ENCODE measurements at regions of chr3 and their contacts with region 1.

Region 1: DNA sequence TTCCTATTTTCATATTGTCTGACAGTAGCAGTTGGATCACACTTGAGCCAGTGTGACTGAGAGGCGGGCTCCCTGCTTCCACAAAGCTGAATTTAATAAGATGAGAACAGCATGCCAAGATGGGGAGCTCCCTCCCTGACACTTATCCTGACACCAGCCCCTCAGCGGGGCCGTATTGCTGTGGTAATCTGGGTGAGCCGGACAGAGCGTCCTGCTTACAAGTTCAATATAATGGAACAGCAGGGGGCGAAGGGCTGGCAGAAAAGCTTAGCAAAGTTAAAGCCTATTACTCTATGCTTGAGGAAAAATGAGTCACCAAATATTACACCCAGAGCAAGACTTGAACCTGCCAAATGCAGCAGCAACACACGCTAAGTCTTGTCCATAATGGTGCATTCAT is 163.8 kb upstream of the CMC1 start:
- DNase-seq: no peak
- ATAC-seq: no peak
- H3K4me3 ChIP-seq: no peak overlapping the region
- H3K27ac ChIP-seq: no peak overlapping the region
- H3K4me1 ChIP-seq: no peaks in the 10 kb centered on the region
- H3K27me3 ChIP-seq: no peaks in the 10 kb centered on the region
- CTCF ChIP-seq: no peak
- EP300 ChIP-seq: no peak
- POLR2A ChIP-seq: no peak
- RAD21 ChIP-seq: no peak

Region 2: GRCh38 chr3:27827041-27827440 is 250.5 kb before region 1 on chr3:
- CTCF ChIA-PET with region 1: no interaction called
- POLR2A ChIA-PET with region 1: no interaction called
- RAD21 ChIA-PET with region 1: no interaction called
- SMC1A ChIA-PET with region 1: no interaction called
- in situ Hi-C with region 1: no loop called
- intact Hi-C with region 1: no loop called
- DNase-seq: no peak
- ATAC-seq: peak; percentile 48; the same call in 2 of the 3 replicates
- H3K4me3 ChIP-seq: no peak overlapping the region
- H3K27ac ChIP-seq: no peak overlapping the region
- H3K4me1 ChIP-seq: no peaks in the 10 kb centered on the region
- H3K27me3 ChIP-seq: no peaks in the 10 kb centered on the region
- CTCF ChIP-seq: no peak; a peak in 1 of 6 replicates
- EP300 ChIP-seq: no peak
- POLR2A ChIP-seq: no peak
- RAD21 ChIP-seq: no peak

Region 3: GRCh38 chr3:28022916-28023315 is 54.7 kb before region 1 on chr3:
- CTCF ChIA-PET with region 1: no interaction called
- POLR2A ChIA-PET with region 1: interaction called, 4 read pairs
- RAD21 ChIA-PET with region 1: interaction called, 3 read pairs
- SMC1A ChIA-PET with region 1: interaction called, 12 read pairs
- in situ Hi-C with region 1: no loop called
- intact Hi-C with region 1: no loop called
- DNase-seq: no peak
- ATAC-seq: 0 out of 3 replicates have a peak, but pooled peaks have one; percentile 8
- H3K4me3 ChIP-seq: no peak overlapping the region
- H3K27ac ChIP-seq: no peak overlapping the region
- H3K4me1 ChIP-seq: no peaks in the 10 kb centered on the region; the same call in 1 of the 2 replicates
- H3K27me3 ChIP-seq: no peaks in the 10 kb centered on the region
- CTCF ChIP-seq: no peak
- EP300 ChIP-seq: no peak
- POLR2A ChIP-seq: no peak
- RAD21 ChIP-seq: no peak

Region 4: GRCh38 chr3:28042095-28042635 is 35.4 kb before region 1 on chr3:
- CTCF ChIA-PET with region 1: interaction called, 6 read pairs
- POLR2A ChIA-PET with region 1: interaction called, 11 read pairs
- RAD21 ChIA-PET with region 1: interaction called, 24 read pairs
- SMC1A ChIA-PET with region 1: interaction called, 85 read pairs
- in situ Hi-C with region 1: no loop called
- intact Hi-C with region 1: loop called (anchors 2 kb)
- DNase-seq: no peak
- ATAC-seq: peak; percentile 78
- H3K4me3 ChIP-seq: no peak overlapping the region
- H3K27ac ChIP-seq: no peak overlapping the region
- H3K4me1 ChIP-seq: no peaks in the 10 kb centered on the region
- H3K27me3 ChIP-seq: no peaks in the 10 kb centered on the region
- CTCF ChIP-seq: no peak
- EP300 ChIP-seq: peak in 1 of 2 experiments; percentile 57; a peak in 1 of 4 replicates
- POLR2A ChIP-seq: no peak
- RAD21 ChIP-seq: no peak

Region 5: DNA sequence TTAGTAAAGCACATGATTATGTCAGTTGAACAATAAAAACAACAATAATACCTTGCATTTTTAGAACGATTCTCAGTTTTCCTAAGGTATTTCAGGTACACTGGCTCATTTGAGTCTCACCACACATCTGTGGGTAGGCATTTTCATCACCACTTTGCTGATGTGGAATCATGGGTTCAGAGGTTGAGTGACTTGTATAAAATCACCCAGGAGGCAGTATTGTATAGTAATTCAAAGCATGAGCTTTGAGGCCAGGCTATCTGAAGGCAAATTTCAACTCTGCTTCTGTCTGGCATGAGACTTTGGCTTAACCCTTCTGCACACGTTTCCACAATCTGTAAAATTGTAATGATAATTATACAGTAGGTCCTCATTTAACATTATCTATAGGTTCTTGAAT is 20.0 kb before region 1 on chr3:
- CTCF ChIA-PET with region 1: interaction called, 20 read pairs
- POLR2A ChIA-PET with region 1: interaction called, 7 read pairs
- RAD21 ChIA-PET with region 1: interaction called, 14 read pairs
- SMC1A ChIA-PET with region 1: interaction called, 77 read pairs
- in situ Hi-C with region 1: no loop called
- intact Hi-C with region 1: no loop called
- DNase-seq: no peak
- ATAC-seq: peak; percentile 41; the same call in 2 of the 3 replicates
- H3K4me3 ChIP-seq: no peak overlapping the region
- H3K27ac ChIP-seq: no peak overlapping the region
- H3K4me1 ChIP-seq: no peaks in the 10 kb centered on the region
- H3K27me3 ChIP-seq: no peaks in the 10 kb centered on the region
- CTCF ChIP-seq: no peak
- EP300 ChIP-seq: no peak
- POLR2A ChIP-seq: no peak
- RAD21 ChIP-seq: 0 out of 2 replicates have a peak, but pooled peaks have one; percentile 13

Region 6: DNA sequence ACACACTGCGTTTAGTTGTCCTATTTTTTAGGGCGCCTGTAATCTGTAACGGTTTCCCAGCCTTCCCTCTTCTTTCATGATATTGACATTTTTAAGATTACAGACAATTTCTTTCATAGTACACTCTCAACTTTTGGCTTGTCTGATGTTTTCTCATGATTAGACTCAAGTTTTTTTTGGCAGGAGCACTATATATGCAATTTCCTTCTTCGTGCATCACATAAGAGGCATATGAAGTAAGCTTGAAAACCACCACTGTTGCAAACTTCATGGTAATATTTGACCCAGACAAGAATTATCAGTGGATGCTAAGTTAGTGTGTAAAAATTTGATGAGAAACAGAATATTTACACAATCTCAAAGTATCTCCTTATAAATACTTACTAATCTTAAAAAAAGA is 44.7 kb after region 1 on chr3:
- CTCF ChIA-PET with region 1: interaction called, 7 read pairs
- POLR2A ChIA-PET with region 1: interaction called, 4 read pairs
- RAD21 ChIA-PET with region 1: interaction called, 94 read pairs
- SMC1A ChIA-PET with region 1: interaction called, 92 read pairs
- in situ Hi-C with region 1: no loop called
- intact Hi-C with region 1: no loop called
- DNase-seq: no peak
- ATAC-seq: no peak
- H3K4me3 ChIP-seq: no peak overlapping the region
- H3K27ac ChIP-seq: no peak overlapping the region
- H3K4me1 ChIP-seq: no peaks in the 10 kb centered on the region
- H3K27me3 ChIP-seq: no peaks in the 10 kb centered on the region
- CTCF ChIP-seq: no peak
- EP300 ChIP-seq: no peak
- POLR2A ChIP-seq: no peak
- RAD21 ChIP-seq: no peak

Region 7: GRCh38 chr3:28139967-28140634 is 62.5 kb after region 1 on chr3:
- CTCF ChIA-PET with region 1: no interaction called
- POLR2A ChIA-PET with region 1: interaction called, 11 read pairs
- RAD21 ChIA-PET with region 1: interaction called, 42 read pairs
- SMC1A ChIA-PET with region 1: interaction called, 23 read pairs
- in situ Hi-C with region 1: no loop called
- intact Hi-C with region 1: no loop called
- DNase-seq: no peak
- ATAC-seq: peak; percentile 6
- H3K4me3 ChIP-seq: no peak overlapping the region
- H3K27ac ChIP-seq: no peak overlapping the region
- H3K4me1 ChIP-seq: no peaks in the 10 kb centered on the region
- H3K27me3 ChIP-seq: no peaks in the 10 kb centered on the region
- CTCF ChIP-seq: no peak
- EP300 ChIP-seq: no peak
- POLR2A ChIP-seq: no peak
- RAD21 ChIP-seq: no peak